ENCODE measurements at regions of chr12 and their contacts with region 1.

Region 1: DNA sequence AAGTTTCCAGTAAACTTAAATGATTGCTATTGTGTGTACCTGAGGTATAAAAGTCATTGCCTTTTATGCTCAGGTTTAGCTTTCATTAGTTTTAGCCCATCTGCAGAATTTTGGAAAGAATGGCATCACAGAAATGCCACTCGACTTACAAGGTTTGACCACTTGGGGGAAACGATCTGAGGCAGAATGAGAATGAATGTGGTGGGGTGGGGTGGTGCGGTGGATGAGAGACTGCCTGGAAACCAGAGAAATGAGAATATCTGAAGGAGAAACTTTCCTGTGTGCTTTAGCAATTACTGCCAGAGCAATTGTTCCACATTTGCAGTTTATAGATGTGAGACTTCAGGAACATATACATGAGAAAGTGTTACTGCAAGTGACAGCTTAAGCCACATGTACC is 225.4 kb upstream of the PDE3A start:
- DNase-seq: no peak
- H3K4me3 ChIP-seq: no peak overlapping the region
- CTCF ChIP-seq: no peak
- POLR2A ChIP-seq: no peak

Region 2: GRCh38 chr12:19675361-19675760 is 467.6 kb before region 1 on chr12:
- intact Hi-C with region 1: no loop called
- DNase-seq: no peak
- H3K4me3 ChIP-seq: no peak overlapping the region
- CTCF ChIP-seq: no peak
- POLR2A ChIP-seq: no peak

Region 3: DNA sequence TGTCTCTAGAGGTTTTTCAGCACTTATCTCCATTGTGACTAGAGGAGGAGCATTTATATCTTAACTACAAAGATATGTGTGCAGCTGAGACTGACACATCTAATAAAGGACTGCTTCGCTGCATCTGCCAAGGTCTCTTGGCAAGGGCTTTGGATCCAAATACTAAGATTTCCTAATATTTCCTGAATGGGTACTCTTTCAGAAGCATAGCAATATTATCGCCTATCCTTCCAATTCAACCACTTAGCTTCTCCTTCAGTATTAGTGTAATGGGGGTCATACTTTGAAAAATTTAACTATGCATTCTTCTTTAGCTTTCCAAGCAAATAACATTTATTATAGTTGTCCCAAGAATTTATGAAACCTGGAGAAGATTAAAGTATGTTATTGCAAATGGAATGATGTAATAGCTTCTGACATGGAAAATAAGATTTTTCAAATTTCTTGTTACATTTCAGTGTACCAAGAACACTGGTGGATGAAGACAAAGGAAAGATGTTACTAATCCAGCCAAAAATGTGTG is 17.6 kb before region 1 on chr12:
- intact Hi-C with region 1: loop called (anchors 1 kb)
- DNase-seq: no peak
- H3K4me3 ChIP-seq: no peak overlapping the region
- CTCF ChIP-seq: no peak
- POLR2A ChIP-seq: no peak